Activated naive CD8-positive, alpha-beta T cell treated with anti-CD3 and anti-CD28 coated beads, Interleukin-2, amount 10 ng/mL, durations not matched to agents 7 days and 5 days (primary cell): ENCODE measurements at regions of chr16 and their contacts with region 1.

Region 1: GRCh38 chr16:1964506-1965395 is at the start of gene RPS2:
- DNase-seq: peak; percentile 99
- ATAC-seq: peak; percentile 90
- H3K4me3 Mint-ChIP-seq: peak within 1 kb of the TSS; percentile 96
- H3K27ac Mint-ChIP-seq: peak within 1 kb of the TSS; percentile 96
- H3K4me1 Mint-ChIP-seq: peaks cover 42% of the 10 kb centered on the region
- H3K27me3 Mint-ChIP-seq: no peaks in the 10 kb centered on the region
- total RNA-seq, gene RPS2: 2,404 to 2,409 TPM

Region 2: GRCh38 chr16:1942810-1943726 is 21.7 kb before region 1 on chr16 and contains the start of gene MSRB1:
- POLR2A ChIA-PET with region 1: interaction called, 30 read pairs
- DNase-seq: peak; percentile 100
- ATAC-seq: peak; percentile 95
- H3K4me3 Mint-ChIP-seq: peak within 1 kb of the TSS; percentile 85
- H3K27ac Mint-ChIP-seq: peak within 1 kb of the TSS; percentile 69
- H3K4me1 Mint-ChIP-seq: peaks cover 10% of the 10 kb centered on the region
- H3K27me3 Mint-ChIP-seq: no peaks in the 10 kb centered on the region
- total RNA-seq, gene MSRB1: 12.0 to 12.5 TPM

Region 3: DNA sequence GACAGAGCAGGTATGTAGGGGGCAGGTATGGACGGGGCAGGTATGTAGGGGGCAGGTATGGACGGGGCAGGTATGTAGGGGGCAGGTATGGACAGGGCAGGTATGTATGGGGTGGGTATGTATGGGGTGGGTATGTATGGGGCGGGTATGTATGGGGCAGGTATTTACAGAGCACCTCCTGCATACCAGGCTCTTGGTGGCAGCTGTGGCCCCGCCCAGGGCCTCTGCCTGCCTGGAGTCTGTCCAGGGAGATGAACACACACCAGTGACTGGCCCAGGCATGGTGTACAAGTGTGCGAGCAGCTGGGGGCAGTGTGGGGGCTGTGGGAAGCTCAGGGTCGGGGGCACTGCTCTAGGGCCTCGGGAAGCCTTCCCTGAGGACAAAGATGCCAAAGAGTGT is 14.7 kb before region 1 on chr16:
- POLR2A ChIA-PET with region 1: interaction called, 16 read pairs
- DNase-seq: no peak
- ATAC-seq: no peak
- H3K4me3 Mint-ChIP-seq: no peak overlapping the region
- H3K27ac Mint-ChIP-seq: no peak overlapping the region
- H3K4me1 Mint-ChIP-seq: no peaks in the 10 kb centered on the region
- H3K27me3 Mint-ChIP-seq: peaks cover 2% of the 10 kb centered on the region

Region 4: DNA sequence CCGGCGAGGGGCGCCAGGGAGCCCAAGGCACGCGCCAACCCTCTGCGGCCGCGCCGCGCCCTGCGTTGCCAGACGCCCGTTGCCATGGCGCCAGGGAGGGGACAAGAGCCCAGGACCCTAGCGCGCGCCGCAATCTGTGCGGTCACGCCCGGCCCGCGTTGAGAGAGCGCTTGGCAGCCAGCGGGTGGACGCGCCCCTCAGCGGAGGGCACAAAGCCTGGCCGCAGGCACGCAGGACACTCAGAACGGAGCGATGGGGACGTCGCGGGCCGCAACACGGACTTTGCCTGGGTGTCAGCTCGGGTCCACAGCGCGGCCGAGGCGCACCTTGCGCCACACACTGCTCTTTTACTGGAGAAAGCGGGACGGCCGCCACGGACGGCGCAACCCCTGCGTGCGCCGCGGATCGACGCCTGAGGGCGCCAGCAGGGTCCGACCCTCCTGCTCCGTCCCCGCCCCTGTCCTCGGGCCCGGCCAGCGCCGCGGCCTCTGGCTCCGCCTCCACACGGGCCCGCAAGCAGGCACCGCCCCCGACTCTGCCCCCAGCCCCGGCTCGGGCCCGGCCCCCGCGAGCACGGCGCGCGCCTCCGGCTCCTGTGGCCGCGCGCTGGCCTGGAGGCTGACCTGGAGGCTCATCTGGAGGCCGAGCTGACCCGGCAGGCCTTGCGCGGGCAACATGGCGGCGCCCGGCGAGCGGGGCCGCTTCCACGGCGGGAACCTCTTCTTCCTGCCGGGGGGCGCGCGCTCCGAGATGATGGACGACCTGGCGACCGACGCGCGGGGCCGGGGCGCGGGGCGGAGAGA is 19.0 kb after region 1 on chr16 and contains the start of gene GFER:
- POLR2A ChIA-PET with region 1: interaction called, 50 read pairs
- DNase-seq: peak; percentile 84
- ATAC-seq: peak; percentile 78
- H3K4me3 Mint-ChIP-seq: peak within 1 kb of the TSS; percentile 83
- H3K27ac Mint-ChIP-seq: peak within 1 kb of the TSS; percentile 25
- H3K4me1 Mint-ChIP-seq: peaks cover 14% of the 10 kb centered on the region
- H3K27me3 Mint-ChIP-seq: peaks cover 35% of the 10 kb centered on the region
- total RNA-seq, gene GFER: 28.8 to 31.9 TPM

Region 5: GRCh38 chr16:1991948-1992703 is 27.4 kb after region 1 on chr16:
- POLR2A ChIA-PET with region 1: interaction called, 36 read pairs
- DNase-seq: peak; percentile 96
- ATAC-seq: peak; percentile 76
- H3K4me3 Mint-ChIP-seq: peak overlapping the region; percentile 75
- H3K27ac Mint-ChIP-seq: no peak overlapping the region
- H3K4me1 Mint-ChIP-seq: peaks cover 20% of the 10 kb centered on the region
- H3K27me3 Mint-ChIP-seq: peaks cover 13% of the 10 kb centered on the region

Region 6: DNA sequence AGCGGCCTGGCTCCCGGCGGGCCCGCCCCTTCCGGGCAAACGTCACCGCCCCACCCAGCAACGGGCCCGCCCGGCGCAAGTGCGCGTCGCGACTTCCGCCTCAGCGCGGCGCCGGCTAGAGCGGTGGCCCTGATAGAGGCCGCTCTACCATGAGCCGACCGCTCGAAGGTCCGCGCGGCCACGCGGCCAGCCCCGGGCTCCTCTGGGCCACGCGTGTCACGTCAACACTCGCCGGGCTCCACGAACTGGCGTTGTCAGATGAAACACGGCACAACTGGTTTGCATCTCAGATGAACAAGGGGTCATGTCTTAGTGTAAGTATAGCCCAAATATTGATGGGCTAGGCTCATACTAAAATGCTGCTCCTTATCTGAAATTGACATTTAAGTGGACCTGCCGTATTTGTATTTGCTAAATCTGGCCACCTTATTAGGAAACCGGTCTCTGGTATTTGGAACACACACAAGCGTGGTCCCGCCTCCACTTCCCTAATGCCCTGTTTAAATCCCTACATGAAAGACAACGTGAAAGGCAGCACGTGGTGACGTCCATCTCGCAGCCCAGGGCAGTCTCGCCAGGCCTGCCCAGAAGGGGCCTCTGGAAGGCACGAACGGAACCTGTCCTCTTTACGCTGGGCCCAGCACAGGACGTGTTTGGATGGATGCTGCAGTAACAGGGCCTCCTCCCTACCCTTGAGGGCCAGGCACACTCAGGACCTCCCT is 45.2 kb after region 1 on chr16 and contains the start of gene ZNF598:
- POLR2A ChIA-PET with region 1: interaction called, 11 read pairs
- DNase-seq: peak; percentile 91
- ATAC-seq: peak; percentile 86
- H3K4me3 Mint-ChIP-seq: peak within 1 kb of the TSS; percentile 93
- H3K27ac Mint-ChIP-seq: peak within 1 kb of the TSS; percentile 92
- H3K4me1 Mint-ChIP-seq: peaks cover 25% of the 10 kb centered on the region
- H3K27me3 Mint-ChIP-seq: no peaks in the 10 kb centered on the region
- total RNA-seq, gene ZNF598: 67.8 to 77.1 TPM